Activated naive CD4-positive, alpha-beta T cell treated with anti-CD3 and anti-CD28 coated beads for 36 hours (primary cell): ENCODE measurements at regions of chr3 and their contacts with region 1.

Region 1: DNA sequence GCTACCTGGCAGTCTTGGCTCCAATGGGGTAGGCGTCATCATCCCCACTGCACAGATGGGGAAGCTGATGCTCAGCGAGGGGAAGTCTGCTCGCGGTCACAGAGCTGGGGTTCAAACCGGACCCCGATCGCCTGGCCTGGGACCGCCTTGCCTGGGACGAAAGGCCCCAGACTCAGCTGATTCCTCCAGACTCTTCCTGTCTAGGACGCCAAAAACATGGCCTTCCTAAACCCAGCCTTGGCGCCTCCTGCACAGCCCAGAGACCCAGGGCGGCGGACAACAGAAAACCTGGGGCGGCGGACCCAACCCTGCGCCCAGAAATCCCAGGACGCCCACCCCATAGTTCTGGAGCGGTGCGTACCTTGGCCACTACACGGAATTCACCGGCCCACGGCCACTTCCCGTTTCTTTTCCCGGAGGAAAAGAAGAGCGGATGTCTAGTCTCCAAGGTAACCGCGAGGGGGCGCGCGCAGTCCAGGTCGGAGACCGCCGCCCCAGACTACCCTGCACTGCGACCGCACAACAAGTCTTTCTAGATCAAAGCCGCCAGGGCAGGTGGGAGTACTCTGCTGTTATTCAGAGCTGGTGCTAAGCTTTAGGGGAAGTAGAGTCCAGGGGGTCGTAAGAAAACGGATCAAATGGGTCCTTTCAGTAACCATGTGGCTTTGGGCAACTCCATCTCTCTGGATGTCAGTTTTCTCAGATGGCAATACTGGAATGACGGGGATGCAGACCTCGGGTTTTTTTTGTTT is 4.9 kb upstream of the IL17RD start:
- DNase-seq: peak; percentile 77
- H3K4me3 Mint-ChIP-seq: peak overlapping the region; percentile 60
- H3K27ac Mint-ChIP-seq: no peak overlapping the region
- H3K4me1 Mint-ChIP-seq: peaks cover 2% of the 10 kb centered on the region
- H3K27me3 Mint-ChIP-seq: peaks cover 49% of the 10 kb centered on the region

Region 2: GRCh38 chr3:57555738-57556458 is 385.9 kb after region 1 on chr3 and contains the start of gene PDE12:
- CTCF ChIA-PET with region 1: interaction called, 3 read pairs
- intact Hi-C with region 1: loop called (anchors 10 kb)
- DNase-seq: peak; percentile 89
- H3K4me3 Mint-ChIP-seq: peak within 1 kb of the TSS; percentile 98
- H3K27ac Mint-ChIP-seq: peak within 1 kb of the TSS; percentile 98
- H3K4me1 Mint-ChIP-seq: peaks cover 33% of the 10 kb centered on the region
- H3K27me3 Mint-ChIP-seq: no peaks in the 10 kb centered on the region
- total RNA-seq, gene PDE12: 15.3 to 15.6 TPM

Region 3: DNA sequence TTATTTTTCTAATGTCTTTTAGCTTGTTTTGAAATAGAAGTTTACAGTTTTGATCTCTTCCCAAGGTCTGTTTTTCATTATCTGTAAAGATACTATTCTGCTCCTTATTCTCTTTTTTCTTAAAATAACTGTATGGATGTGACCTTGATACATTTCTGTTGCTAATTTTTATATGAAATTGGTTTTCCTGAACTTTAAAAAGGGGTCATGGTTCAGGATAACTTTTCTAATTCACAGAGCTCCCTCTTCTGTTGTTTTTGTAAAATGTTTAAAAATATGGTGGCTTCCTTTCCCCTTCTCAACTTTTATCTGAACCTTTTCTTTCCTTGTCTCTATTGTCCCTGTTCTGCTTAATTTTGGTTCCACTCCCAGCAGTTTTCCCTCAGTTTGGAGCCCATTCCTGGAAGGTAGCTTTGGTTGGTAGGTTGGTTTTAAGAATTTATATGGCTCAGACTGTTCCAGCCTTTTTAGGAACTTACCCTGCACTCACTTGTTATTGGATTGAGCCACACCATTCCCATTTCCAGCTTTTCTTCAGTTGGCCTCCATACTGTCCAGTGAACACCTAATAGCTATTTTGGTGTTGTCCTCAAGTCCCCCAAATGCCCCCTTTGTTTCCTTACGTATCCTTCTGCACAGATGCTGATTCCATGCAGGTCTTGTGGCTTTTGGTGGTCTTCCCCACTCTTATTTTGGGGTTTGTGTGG is 656.4 kb after region 1 on chr3:
- CTCF ChIA-PET with region 1: no interaction called
- intact Hi-C with region 1: loop called (anchors 10 kb)
- DNase-seq: no peak
- H3K4me3 Mint-ChIP-seq: no peak overlapping the region
- H3K27ac Mint-ChIP-seq: no peak overlapping the region
- H3K4me1 Mint-ChIP-seq: peaks cover 19% of the 10 kb centered on the region
- H3K27me3 Mint-ChIP-seq: no peaks in the 10 kb centered on the region

Region 4: DNA sequence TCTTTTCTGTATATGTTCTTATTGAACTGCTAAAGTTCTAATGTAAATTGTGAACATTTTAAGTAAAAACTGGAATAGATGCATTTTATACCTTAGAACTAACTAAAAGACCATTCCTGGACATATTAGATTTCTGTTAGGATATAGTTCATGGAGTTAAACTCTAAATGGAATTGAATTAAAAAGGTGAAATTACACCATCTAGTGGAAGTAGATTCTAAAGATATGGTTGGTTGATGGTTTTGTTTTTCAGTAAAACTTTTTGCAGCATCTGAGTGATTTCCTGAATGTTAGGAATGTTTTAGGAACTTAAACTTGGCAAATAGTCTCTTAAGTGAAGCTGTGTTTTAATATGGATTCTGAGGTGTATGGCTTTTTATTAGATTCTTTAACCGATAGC is 682.8 kb after region 1 on chr3:
- CTCF ChIA-PET with region 1: no interaction called
- intact Hi-C with region 1: loop called (anchors 10 kb)
- DNase-seq: no peak
- H3K4me3 Mint-ChIP-seq: no peak overlapping the region
- H3K27ac Mint-ChIP-seq: no peak overlapping the region
- H3K4me1 Mint-ChIP-seq: no peaks in the 10 kb centered on the region
- H3K27me3 Mint-ChIP-seq: no peaks in the 10 kb centered on the region